ENCODE measurements at regions of chr5 and their contacts with region 1.

Region 1: DNA sequence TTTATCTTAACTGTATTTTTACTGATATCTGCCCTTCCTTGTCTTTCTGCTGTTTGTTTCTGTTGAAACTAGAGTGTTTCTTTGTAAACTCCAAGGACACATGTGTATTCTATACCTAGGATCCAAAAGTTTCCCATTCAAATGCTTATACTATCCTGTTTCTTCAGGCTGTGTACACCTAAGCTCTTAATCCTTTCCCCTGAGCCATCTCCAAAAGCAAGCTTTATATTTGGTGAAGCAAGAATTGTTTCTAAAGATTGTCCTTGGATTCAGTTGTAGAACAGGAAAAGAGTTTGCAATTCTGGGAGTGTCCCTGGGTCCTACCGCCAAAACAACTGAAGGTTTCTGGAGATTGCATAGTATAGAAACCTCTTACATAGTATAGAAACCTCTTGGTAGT is 65.9 kb downstream of the CWC27 start:
- DNase-seq: no peak
- H3K4me3 ChIP-seq: no peak overlapping the region
- H3K27ac ChIP-seq: no peak overlapping the region
- H3K4me1 ChIP-seq: no peaks in the 10 kb centered on the region
- H3K27me3 ChIP-seq: no peaks in the 10 kb centered on the region
- CTCF ChIP-seq: no peak
- EP300 ChIP-seq: no peak
- POLR2A ChIP-seq: no peak

Region 2: DNA sequence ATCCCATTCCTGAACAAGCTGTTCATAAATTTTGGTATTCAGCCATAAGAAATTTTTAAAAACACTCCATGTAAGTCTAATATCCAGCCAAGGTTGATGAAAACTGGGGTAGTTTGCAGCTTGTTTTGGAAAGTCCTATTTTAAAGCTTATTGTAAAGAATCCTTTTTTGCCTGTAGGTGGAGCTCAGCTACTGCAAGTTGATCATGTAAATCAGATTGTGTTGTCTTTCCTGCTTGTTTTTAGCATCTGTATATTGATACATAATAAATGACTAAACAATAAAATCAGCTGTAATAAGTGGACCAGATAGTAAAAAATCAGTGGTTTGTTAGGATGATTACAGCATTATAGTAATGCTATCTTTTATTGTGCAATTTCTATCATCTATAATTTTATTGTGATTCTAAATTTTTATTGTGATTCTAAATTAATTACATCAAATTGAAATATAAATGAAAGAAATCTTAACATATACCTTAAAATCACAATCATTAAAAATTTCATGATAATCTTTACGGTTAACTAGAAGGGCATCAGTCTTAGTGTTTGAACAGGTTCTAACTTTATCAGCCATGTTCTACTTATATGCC is 23.5 kb before region 1 on chr5:
- intact Hi-C with region 1: loop called in 1 of 4 experiments (anchors 1 kb)
- DNase-seq: no peak
- H3K4me3 ChIP-seq: no peak overlapping the region
- H3K27ac ChIP-seq: no peak overlapping the region
- H3K4me1 ChIP-seq: no peaks in the 10 kb centered on the region
- H3K27me3 ChIP-seq: no peaks in the 10 kb centered on the region
- CTCF ChIP-seq: peak in 2 of 3 donors; percentile 34 to 39
- EP300 ChIP-seq: no peak
- POLR2A ChIP-seq: no peak